ENCODE measurements at regions of chr14 and their contacts with region 1.

Region 1: DNA sequence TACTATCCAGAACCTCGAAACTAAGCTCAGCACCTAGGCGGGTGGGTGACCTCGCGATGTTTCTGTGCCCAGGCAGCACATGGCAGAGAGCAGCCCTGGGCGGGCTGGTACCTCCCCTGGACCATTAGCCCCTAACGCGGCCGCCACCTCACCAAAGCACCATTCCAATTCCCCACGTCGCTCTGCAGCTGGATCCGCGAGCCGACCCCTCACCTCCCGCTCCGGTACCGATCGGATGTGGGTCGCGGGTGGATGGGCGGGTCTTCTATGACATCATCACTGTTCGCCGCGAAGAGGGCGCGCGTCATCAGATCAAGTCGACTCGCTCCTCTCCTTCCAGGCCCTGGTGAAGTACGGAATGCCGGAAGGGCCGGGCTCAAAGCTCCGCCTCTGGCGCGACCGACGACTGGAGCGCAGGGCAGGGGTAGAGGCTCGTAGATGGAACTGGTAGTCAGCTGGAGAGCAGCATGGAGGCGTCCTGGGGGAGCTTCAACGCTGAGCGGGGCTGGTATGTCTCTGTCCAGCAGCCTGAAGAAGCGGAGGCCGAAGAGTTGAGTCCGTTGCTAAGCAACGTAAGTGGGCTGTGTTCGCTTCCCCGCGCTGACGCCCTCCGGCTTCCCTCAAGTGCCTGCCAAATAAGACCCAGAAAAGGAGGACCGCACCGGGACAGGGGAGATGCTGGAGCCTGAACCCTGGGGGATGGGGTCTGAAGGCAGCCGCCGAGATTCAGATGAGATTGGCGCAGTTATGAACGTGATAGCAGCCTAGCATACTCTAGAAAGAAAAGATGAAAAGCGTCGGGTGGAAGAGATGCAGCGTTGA is at the starts of genes SLC38A6 and TRMT5:
- DNase-seq: peak; percentile 94
- ATAC-seq: peak; percentile 89
- H3K4me3 Mint-ChIP-seq: no peak within 1 kb of the TSS
- H3K27ac Mint-ChIP-seq: no peak within 1 kb of the TSS
- H3K4me1 Mint-ChIP-seq: peaks cover 32% of the 10 kb centered on the region
- H3K27me3 Mint-ChIP-seq: no peaks in the 10 kb centered on the region
- total RNA-seq, gene SLC38A6: 4.5 to 5.3 TPM
- total RNA-seq, gene TRMT5: 19.7 to 20.8 TPM

Region 2: GRCh38 chr14:60248697-60249318 is 732.2 kb before region 1 on chr14 and contains the start of gene PPM1A:
- CTCF ChIA-PET with region 1: no interaction called
- POLR2A ChIA-PET with region 1: no interaction called
- intact Hi-C with region 1: loop called in 1 of 2 experiments (anchors 1 kb)
- DNase-seq: peak; percentile 97
- ATAC-seq: peak; percentile 73
- H3K4me3 Mint-ChIP-seq: peak within 1 kb of the TSS; percentile 94
- H3K27ac Mint-ChIP-seq: peak within 1 kb of the TSS; percentile 100
- H3K4me1 Mint-ChIP-seq: peaks cover 50% of the 10 kb centered on the region
- H3K27me3 Mint-ChIP-seq: no peaks in the 10 kb centered on the region
- total RNA-seq, gene PPM1A: 30.4 to 41.5 TPM

Region 3: GRCh38 chr14:60724137-60724619 is 256.8 kb before region 1 on chr14 and contains the start of gene SIX4:
- CTCF ChIA-PET with region 1: no interaction called
- POLR2A ChIA-PET with region 1: no interaction called
- intact Hi-C with region 1: loop called (anchors 2 to 5 kb)
- DNase-seq: peak; percentile 47
- ATAC-seq: peak; percentile 38
- H3K4me3 Mint-ChIP-seq: peak within 1 kb of the TSS; percentile 77
- H3K27ac Mint-ChIP-seq: no peak within 1 kb of the TSS
- H3K4me1 Mint-ChIP-seq: peaks cover 16% of the 10 kb centered on the region
- H3K27me3 Mint-ChIP-seq: peaks cover 68% of the 10 kb centered on the region
- total RNA-seq, gene SIX4: 0.11 TPM in 1 of 2 experiments, not detected in the other

Region 4: GRCh38 chr14:60734465-60735242 is 246.4 kb before region 1 on chr14 and contains the start of gene MNAT1:
- CTCF ChIA-PET with region 1: no interaction called
- POLR2A ChIA-PET with region 1: no interaction called
- intact Hi-C with region 1: loop called in 1 of 2 experiments (anchors 1 kb)
- DNase-seq: peak; percentile 88
- ATAC-seq: peak; percentile 96
- H3K4me3 Mint-ChIP-seq: peak within 1 kb of the TSS; percentile 99
- H3K27ac Mint-ChIP-seq: peak within 1 kb of the TSS; percentile 86
- H3K4me1 Mint-ChIP-seq: peaks cover 18% of the 10 kb centered on the region
- H3K27me3 Mint-ChIP-seq: peaks cover 15% of the 10 kb centered on the region
- total RNA-seq, gene MNAT1: 36.2 to 40.3 TPM

Region 5: DNA sequence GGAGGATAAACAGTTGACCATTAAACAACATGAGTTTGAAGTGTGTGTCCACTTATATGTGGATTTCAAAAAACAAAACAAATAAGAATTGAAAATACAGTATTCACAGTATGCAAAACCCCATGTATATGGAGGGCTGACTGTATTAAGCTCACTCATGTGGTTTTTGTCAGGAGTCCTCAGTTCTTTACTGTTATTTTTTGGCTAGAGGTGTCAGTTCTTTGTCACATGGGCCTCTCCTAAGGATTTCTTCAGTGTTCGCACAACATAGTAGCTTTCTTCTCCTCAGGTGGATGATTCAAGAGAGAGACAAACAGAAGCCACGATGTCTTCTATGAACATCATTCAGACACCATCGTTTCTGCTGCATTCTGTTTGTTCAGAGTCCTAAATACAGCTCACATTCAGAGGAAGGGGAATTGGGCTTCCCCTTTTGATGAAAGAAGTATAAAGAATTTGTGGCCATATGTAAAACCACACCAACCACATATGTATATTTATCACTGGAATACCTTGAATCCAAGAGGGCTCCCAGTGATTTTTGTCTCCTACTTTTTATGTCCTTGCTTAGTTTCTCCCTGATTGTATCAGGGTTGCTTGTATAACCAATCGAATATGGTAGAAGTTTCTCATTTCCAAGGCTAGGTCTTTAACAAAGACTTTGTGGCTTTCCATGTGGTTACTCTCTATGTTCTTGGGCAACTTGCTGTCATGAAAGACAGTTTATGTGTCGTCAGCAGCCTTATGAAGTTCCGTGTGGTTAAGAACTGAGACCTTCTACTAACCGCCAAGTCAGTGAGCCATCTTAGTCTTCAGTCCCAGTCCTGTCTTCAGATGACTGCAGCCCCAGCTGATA is 227.5 kb before region 1 on chr14:
- CTCF ChIA-PET with region 1: no interaction called
- POLR2A ChIA-PET with region 1: no interaction called
- intact Hi-C with region 1: loop called in 1 of 2 experiments (anchors 1 kb)
- DNase-seq: peak; percentile 71
- ATAC-seq: peak; percentile 94
- H3K4me3 Mint-ChIP-seq: peak overlapping the region; percentile 19
- H3K27ac Mint-ChIP-seq: peak overlapping the region; percentile 63
- H3K4me1 Mint-ChIP-seq: peaks cover 40% of the 10 kb centered on the region
- H3K27me3 Mint-ChIP-seq: peaks cover 12% of the 10 kb centered on the region

Region 6: DNA sequence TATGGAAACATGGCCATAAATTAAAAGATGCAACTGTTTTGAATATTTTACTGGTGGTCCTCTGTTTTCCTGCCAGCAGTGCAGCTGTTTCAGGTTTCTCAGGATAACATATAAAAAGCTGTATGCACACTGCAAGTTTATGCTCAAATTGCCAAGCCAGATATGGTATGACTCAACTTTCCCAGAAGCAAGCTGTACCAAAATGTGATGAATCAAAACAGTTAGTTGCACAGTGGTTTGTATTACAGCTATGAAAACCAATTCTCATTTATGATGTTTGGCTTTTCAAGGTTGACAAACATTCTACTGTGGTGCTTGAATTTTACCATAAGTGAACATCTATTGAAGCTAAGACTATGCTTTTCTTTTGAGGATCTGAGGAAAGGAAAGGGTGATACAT is 15.6 kb before region 1 on chr14:
- CTCF ChIA-PET with region 1: interaction called, 4 read pairs
- POLR2A ChIA-PET with region 1: no interaction called
- intact Hi-C with region 1: loop called in 1 of 2 experiments (anchors 1 kb)
- DNase-seq: peak; percentile 12
- ATAC-seq: peak; percentile 92
- H3K4me3 Mint-ChIP-seq: no peak overlapping the region
- H3K27ac Mint-ChIP-seq: peak overlapping the region; percentile 26
- H3K4me1 Mint-ChIP-seq: peaks cover 9% of the 10 kb centered on the region
- H3K27me3 Mint-ChIP-seq: no peaks in the 10 kb centered on the region

Region 7: DNA sequence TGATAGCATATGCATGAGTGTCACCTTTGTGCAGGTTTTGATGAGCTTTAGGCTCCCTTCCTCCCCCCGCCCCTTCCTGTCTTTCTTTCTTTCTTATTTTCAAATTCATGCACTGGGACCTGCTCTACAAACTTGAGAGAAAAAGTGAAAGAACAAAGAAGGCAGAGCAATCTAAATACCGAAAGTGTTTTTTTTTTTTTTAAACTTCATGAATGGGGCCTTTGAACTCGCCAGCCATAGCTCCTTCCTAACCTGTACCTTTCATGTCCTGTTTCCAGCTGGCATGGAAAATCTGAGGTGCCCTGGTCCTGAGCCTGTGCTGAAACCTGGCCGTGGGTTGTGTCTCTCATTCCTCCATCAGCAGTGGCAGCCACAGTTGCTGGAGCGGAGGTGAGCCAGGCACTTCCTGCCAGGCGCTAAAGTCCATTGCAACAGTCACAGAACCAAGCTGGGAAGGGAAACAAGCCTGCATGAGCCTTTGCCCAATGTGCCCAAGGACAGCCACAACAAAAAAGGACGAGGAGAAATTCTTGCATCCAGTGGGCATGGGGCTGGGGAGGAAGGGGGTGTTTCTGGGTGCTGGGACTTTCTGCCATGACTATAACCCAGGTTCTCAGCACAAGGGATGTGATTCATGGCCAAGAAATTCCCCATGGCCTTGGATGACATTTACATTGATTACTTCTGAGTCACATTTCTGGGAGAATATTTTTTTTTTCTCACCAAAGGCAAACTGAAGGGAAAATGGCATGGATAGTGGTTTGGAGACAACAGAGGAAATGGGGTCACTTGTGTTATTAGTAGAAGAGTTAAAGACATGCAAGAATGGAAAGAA is 197.4 kb after region 1 on chr14:
- CTCF ChIA-PET with region 1: no interaction called
- POLR2A ChIA-PET with region 1: no interaction called
- intact Hi-C with region 1: loop called in 1 of 2 experiments (anchors 1 kb)
- DNase-seq: peak; percentile 85
- ATAC-seq: peak; percentile 82
- H3K4me3 Mint-ChIP-seq: peak overlapping the region; percentile 38
- H3K27ac Mint-ChIP-seq: peak overlapping the region; percentile 88
- H3K4me1 Mint-ChIP-seq: peaks cover 52% of the 10 kb centered on the region
- H3K27me3 Mint-ChIP-seq: peaks cover 4% of the 10 kb centered on the region

Region 8: DNA sequence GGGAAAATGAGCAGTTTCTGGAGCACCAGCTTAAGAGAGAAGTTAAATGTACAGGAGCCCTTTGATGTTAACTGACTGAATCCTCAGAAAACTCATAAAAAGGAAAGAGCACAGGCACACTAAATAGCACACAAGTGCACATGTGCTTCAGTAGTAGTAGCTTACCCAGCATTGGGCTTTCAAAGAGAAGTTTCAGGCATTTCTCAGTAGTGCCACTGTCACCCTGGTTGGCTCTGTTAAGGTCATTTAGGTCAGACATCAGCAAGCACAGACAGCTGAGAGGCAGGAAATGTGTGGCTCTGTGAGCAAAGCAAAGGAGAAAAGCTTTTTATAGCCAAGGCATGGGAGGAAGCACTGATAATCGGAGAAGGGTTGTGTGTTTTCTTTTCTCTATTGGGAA is 618.0 kb after region 1 on chr14:
- CTCF ChIA-PET with region 1: no interaction called
- POLR2A ChIA-PET with region 1: no interaction called
- intact Hi-C with region 1: no loop called
- DNase-seq: peak; percentile 47
- ATAC-seq: peak; percentile 49
- H3K4me3 Mint-ChIP-seq: no peak overlapping the region
- H3K27ac Mint-ChIP-seq: peak overlapping the region; percentile 59
- H3K4me1 Mint-ChIP-seq: peaks cover 55% of the 10 kb centered on the region
- H3K27me3 Mint-ChIP-seq: no peaks in the 10 kb centered on the region

Measured in activated CD4-positive, alpha-beta T cell treated with anti-CD3 and anti-CD28 coated beads for 36 hours (primary cell).